Activated CD8-positive, alpha-beta T cell treated with anti-CD3 and anti-CD28 coated beads, Interleukin-2, amount 10 ng/mL, durations not matched to agents 7 days and 5 days (primary cell): ENCODE measurements at regions of chr1 and their contacts with region 1.

Region 1: GRCh38 chr1:228457396-228458176 is 29.6 kb upstream of the RNF187 start:
- DNase-seq: peak; percentile 95
- ATAC-seq: peak; percentile 82
- H3K4me3 Mint-ChIP-seq: peak overlapping the region; percentile 99
- H3K27ac Mint-ChIP-seq: peak overlapping the region; percentile 100
- H3K4me1 Mint-ChIP-seq: peaks cover 51% of the 10 kb centered on the region
- H3K27me3 Mint-ChIP-seq: no peaks in the 10 kb centered on the region

Region 2: GRCh38 chr1:228405987-228406265 is 51.7 kb before region 1 on chr1:
- CTCF ChIA-PET with region 1: interaction called, 7 read pairs
- POLR2A ChIA-PET with region 1: interaction called, 60 read pairs
- DNase-seq: peak; percentile 42
- ATAC-seq: peak; percentile 4
- H3K4me3 Mint-ChIP-seq: peak overlapping the region; percentile 90
- H3K27ac Mint-ChIP-seq: peak overlapping the region; percentile 95
- H3K4me1 Mint-ChIP-seq: peaks cover 53% of the 10 kb centered on the region
- H3K27me3 Mint-ChIP-seq: no peaks in the 10 kb centered on the region

Region 3: GRCh38 chr1:228471762-228472398 is 14.3 kb after region 1 on chr1:
- CTCF ChIA-PET with region 1: interaction called, 123 read pairs
- POLR2A ChIA-PET with region 1: interaction called, 27 read pairs
- DNase-seq: peak; percentile 64
- ATAC-seq: peak; percentile 85
- H3K4me3 Mint-ChIP-seq: no peak overlapping the region
- H3K27ac Mint-ChIP-seq: peak overlapping the region; percentile 37
- H3K4me1 Mint-ChIP-seq: peaks cover 43% of the 10 kb centered on the region
- H3K27me3 Mint-ChIP-seq: peaks cover 7% of the 10 kb centered on the region

Region 4: GRCh38 chr1:228478912-228479711 is 21.5 kb after region 1 on chr1:
- CTCF ChIA-PET with region 1: interaction called, 123 read pairs
- POLR2A ChIA-PET with region 1: interaction called, 16 read pairs
- DNase-seq: peak; percentile 59
- ATAC-seq: peak; percentile 81
- H3K4me3 Mint-ChIP-seq: peak overlapping the region; percentile 73
- H3K27ac Mint-ChIP-seq: peak overlapping the region; percentile 98
- H3K4me1 Mint-ChIP-seq: peaks cover 66% of the 10 kb centered on the region
- H3K27me3 Mint-ChIP-seq: no peaks in the 10 kb centered on the region

Region 5: DNA sequence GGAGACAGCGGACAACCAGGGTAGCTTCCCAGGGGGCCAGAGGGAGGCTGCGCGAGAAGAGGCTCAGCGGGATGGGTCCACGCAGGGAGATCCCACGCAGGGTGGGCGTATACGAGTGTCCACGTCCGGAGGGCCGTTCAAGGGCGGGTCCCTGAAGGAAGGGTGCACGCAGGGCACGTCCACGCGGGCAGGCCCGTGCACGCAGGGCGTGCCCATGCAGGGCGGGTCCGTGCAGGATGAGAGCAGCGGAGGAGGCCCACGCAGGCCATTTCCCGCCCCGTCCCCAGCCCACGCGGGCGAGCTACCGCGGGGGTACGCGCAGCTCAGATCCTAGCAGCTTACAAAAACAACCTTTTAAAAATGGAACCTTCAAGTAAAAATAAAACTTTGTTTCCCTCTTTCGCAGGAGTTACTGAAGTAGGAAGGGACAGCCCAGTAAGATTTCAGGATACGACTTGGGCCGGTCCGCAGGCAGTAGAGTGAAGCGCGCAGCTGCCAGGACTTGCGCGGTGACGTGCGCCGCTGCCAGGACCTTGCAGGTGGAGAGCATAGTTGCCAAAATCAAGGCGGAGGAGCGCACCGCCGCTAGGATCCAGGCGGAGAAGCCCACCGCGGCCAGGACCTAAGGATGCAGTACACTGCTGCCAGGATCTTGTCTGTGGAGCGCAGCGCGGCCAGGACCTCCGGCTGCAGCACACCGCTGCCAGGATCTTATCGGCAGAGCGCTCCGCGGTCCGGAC is 29.2 kb after region 1 on chr1:
- CTCF ChIA-PET with region 1: interaction called, 68 read pairs
- POLR2A ChIA-PET with region 1: interaction called, 26 read pairs
- DNase-seq: peak; percentile 86
- ATAC-seq: peak; percentile 71
- H3K4me3 Mint-ChIP-seq: peak overlapping the region; percentile 88
- H3K27ac Mint-ChIP-seq: peak overlapping the region; percentile 100
- H3K4me1 Mint-ChIP-seq: peaks cover 58% of the 10 kb centered on the region
- H3K27me3 Mint-ChIP-seq: no peaks in the 10 kb centered on the region